AG04449 (cell line): ENCODE measurements at regions of chr11 and their contacts with region 1.

Region 1: DNA sequence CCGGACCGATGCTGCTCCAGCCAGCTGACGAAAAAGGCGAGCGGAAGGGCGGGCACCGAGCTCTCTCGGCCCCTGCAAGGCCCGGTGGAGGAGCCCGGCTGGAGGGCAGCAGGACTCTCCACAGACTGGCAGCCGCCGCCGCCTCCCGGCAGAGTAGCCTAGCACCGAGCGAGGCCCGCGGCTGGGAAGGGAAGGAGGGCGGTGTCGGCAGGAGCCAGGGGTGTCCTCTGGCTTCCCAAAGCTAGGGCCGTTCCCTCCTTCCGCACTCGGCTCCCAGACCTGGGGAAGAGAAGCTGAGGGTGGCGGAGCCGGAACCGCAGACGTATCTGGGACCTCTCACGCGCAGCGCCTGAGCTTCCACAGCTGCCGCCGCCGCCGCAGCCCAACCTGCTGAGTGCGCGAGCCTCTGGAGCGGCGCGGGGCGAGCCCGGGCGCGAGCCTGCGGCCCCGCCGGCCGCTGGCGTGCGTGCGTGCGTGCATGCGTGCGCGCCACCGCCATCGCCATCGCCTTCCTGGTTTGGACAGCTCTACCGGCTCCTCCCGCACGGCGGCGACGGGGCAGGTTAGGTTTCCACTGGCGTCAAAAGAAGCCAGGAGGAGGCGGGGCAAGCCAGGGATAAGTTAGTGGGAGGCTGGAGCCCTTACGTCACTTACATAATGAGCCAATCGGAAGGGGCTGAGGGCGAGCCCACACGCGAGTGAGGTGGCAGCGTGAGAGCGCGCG is at the start of gene RAB6A:
- DNase-seq: peak; percentile 97
- H3K4me3 ChIP-seq: peak within 1 kb of the TSS; percentile 91
- CTCF ChIP-seq: peak; percentile 52

Region 2: GRCh38 chr11:73779084-73779902 is 18.5 kb after region 1 on chr11:
- CTCF ChIA-PET with region 1: interaction called, 12 read pairs
- POLR2A ChIA-PET with region 1: interaction called, 50 read pairs
- DNase-seq: peak; percentile 90
- H3K4me3 ChIP-seq: peak overlapping the region; percentile 62
- CTCF ChIP-seq: no peak

Region 3: DNA sequence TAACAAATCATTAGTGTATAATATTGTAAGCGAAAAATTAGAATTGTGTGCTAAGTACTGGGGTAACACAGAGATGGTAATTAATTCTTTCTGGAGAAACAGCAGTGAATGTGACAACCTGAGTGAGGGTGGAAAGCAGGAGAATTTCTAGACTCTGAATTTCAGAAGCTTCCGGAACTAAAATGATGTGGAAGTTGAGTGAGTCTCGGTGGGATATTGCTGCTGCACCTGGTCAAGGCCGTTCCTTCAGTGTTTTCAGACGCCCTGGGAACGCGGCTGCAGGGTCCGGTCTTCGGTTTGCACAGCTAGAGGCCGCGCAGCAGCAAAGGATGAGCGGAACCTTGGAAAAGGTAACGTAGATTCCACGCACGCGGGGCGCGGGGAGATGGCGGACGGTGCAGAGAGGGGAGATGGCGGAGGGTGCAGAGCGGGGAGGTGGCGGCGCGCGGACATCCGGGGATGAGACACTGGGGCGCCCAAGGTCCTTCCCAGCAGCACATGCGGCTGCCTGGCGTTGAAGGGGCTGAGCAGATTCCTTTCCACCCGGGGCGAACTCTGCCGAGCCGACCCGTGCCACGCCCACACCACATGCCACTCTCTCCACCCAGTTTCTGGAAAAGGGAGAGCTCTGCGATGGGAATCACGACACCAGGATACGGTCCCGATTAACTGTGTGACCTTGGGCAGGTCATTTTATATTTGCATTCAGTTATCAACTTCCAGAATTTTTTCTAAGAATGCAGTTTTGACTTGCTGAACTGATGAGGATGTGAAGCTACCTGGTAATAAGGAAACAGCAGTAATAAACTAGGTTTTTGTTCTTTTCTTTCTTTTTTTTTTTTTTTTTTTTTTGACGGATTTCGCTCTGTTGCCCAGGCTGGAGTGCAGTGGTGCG is 27.0 kb after region 1 on chr11 and contains the start of gene MRPL48:
- CTCF ChIA-PET with region 1: interaction called, 5 read pairs
- POLR2A ChIA-PET with region 1: interaction called, 18 read pairs
- DNase-seq: peak; percentile 52
- H3K4me3 ChIP-seq: peak within 1 kb of the TSS; percentile 96
- CTCF ChIP-seq: no peak